Activated CD4-positive, alpha-beta T cell treated with anti-CD3 and anti-CD28 coated beads for 36 hours (primary cell): ENCODE measurements at regions of chr1 and their contacts with region 1.

Region 1: DNA sequence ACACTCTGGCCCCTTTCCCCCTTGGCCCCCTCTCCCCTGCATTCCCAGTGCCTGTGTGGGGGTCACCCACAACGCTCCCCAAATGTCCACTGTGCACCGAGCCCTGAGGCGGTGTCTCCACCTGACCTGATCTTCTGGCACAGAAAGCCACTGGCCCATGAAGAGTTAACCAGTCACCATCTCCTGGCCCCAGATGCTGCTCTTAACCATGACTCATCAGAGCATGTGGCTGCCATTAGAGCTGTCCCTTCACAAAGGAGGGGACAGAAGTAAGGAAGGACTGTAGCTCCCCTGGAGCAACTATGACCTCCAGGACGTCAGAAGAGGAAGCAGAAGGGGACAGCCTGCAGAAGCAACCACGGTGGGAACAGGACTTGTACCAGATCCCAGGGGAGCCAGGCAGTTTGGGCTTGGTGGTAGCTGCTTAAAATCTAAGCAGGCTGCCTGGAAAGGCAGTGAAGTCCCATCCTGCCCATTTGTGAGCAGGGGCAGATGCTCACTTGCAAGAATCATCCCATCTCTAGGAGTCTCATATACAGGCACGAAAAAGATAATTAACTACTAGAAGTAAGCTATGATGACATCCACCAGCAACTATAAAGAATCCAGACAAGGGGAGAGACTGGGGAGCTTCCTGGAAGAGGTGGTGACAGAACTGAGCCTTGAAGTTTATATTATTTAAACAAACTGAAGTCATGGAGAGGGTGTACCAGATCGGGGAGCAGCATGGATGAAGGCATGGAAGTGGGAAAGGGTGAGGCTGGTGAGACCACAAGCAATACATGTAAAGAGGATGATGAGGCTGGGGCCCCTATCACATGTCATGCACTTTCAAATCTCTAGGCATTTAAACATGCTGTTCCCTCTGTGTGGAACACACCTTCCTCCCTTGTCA is 1.1 kb upstream of the TTC39A start:
- DNase-seq: peak; percentile 23
- ATAC-seq: peak; percentile 52
- H3K4me3 Mint-ChIP-seq: peak overlapping the region; percentile 62
- H3K27ac Mint-ChIP-seq: peak overlapping the region; percentile 64
- H3K4me1 Mint-ChIP-seq: peaks cover 15% of the 10 kb centered on the region
- H3K27me3 Mint-ChIP-seq: peaks cover 29% of the 10 kb centered on the region

Region 2: DNA sequence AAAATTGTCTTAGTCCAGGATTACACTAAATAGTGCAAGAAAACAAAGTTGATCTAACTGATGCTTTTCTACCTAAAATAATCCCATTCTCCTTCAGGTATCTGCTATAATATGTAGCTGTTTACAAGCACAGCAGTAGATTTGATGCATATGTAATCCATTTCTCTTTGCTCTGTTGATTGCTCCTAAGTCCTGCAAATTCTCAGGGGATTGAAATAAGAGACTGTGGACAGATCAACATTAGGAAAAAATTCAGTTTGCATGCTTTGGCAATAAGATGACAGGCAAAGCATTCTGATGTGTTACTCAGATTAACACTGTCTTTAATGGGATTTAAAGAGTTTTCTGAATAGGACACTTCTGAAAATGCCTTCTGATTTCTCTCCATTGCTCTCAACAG is 60.7 kb before region 1 on chr1:
- CTCF ChIA-PET with region 1: no interaction called
- POLR2A ChIA-PET with region 1: no interaction called
- intact Hi-C with region 1: loop called in 1 of 2 experiments (anchors 10 kb)
- DNase-seq: no peak
- ATAC-seq: no peak
- H3K4me3 Mint-ChIP-seq: no peak overlapping the region
- H3K27ac Mint-ChIP-seq: no peak overlapping the region
- H3K4me1 Mint-ChIP-seq: peaks cover 25% of the 10 kb centered on the region
- H3K27me3 Mint-ChIP-seq: no peaks in the 10 kb centered on the region

Region 3: GRCh38 chr1:51303751-51304251 is 27.7 kb before region 1 on chr1:
- CTCF ChIA-PET with region 1: no interaction called
- POLR2A ChIA-PET with region 1: no interaction called
- intact Hi-C with region 1: no loop called
- DNase-seq: peak; percentile 50
- ATAC-seq: peak; percentile 60
- H3K4me3 Mint-ChIP-seq: no peak overlapping the region
- H3K27ac Mint-ChIP-seq: peak overlapping the region; percentile 39
- H3K4me1 Mint-ChIP-seq: peaks cover 10% of the 10 kb centered on the region
- H3K27me3 Mint-ChIP-seq: no peaks in the 10 kb centered on the region